MCF 10A (cell line): ENCODE measurements at regions of chr5 and their contacts with region 1.

Region 1: DNA sequence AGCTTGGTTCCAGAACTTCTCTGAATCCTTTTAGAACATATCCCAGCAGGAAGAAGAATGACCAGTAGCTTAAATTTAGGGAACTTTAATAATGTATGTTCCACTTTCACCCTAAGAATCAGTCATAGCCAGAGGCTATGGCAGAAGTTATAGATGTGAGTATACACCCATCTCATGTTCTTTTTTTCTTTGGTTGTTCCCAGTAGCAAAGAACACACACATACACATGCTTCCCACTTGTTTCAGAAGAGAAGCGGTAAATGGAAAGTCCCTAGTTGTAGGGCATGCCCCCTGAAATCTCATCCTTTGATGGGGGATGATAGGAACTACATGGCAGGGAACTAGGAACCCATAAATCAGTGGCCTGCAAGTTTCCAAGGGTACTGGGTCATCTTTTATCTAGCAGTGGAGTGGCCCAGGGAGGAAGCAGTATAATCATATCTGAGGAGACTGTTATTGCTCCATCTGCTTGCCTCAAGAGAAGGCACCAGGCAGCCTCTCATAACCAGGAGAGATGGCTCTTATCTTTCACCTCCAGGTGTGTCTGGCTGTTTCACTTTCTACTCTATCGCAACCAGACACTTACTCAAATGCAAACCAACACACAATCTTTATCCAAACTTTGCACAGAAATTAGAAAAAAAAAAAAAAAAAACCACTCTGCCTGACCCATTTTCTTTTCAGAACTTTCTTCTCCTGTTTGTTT is 109.5 kb downstream of the SNCAIP start:
- DNase-seq: no peak
- H3K4me3 Mint-ChIP-seq: no peak overlapping the region
- H3K27ac Mint-ChIP-seq: no peak overlapping the region
- H3K4me1 Mint-ChIP-seq: no peaks in the 10 kb centered on the region
- H3K27me3 Mint-ChIP-seq: no peaks in the 10 kb centered on the region
- CTCF ChIP-seq: no peak

Region 2: DNA sequence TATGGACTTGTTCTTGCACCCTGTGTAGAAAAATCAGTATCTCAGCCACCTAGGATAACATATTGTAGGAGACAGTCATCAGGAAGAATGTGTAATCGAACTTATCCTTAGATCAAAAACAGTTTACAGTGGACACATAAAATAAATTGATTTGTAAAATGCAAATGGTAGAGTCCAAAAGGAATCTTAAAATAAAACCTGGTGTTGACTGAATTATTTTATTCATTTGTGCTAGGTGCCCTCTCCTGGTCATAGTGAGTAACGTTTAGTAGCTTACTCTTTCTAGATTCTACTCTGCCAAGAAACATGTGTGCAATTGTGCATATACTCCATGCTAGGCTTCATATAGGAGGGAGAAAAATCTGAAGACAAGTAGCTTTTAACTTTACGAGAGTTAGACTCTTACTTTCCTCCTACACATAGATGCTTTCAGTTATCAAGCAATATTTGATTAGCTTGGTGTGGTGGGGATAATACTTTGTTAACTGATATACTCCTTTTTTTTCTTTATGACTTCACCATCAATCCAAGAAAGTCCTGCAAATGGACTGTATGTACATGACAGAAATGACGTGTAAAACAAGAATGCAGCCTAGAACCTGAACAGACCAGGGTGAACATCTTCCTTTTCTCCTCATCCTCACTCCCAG is 319.8 kb before region 1 on chr5:
- CTCF ChIA-PET with region 1: no interaction called
- POLR2A ChIA-PET with region 1: no interaction called
- intact Hi-C with region 1: no loop called
- DNase-seq: peak; percentile 76
- H3K4me3 Mint-ChIP-seq: no peak overlapping the region
- H3K27ac Mint-ChIP-seq: peak overlapping the region; percentile 35
- H3K4me1 Mint-ChIP-seq: peaks cover 19% of the 10 kb centered on the region
- H3K27me3 Mint-ChIP-seq: no peaks in the 10 kb centered on the region
- CTCF ChIP-seq: peak; percentile 67

Region 3: DNA sequence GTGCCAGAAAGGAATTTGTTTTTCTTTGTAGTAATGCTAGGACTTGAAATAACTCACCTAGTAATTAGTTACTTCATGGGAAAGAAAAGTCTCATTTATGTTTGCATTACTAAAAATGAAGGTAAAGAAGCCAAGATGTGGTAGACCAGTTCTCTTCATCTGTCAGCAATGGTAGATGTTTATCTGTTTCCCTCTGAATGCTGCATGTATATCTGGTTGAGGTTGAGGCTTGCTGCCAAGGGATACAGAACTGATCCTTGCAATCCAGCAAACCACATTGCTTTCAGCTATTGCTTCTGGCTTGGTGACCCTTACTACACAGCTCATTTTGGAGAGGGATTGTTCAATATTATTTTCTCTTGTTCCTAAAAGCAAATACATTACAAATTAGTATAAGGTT is 218.6 kb before region 1 on chr5:
- CTCF ChIA-PET with region 1: interaction called, 402 read pairs
- POLR2A ChIA-PET with region 1: no interaction called
- intact Hi-C with region 1: no loop called
- DNase-seq: no peak
- H3K4me3 Mint-ChIP-seq: no peak overlapping the region
- H3K27ac Mint-ChIP-seq: no peak overlapping the region
- H3K4me1 Mint-ChIP-seq: no peaks in the 10 kb centered on the region
- H3K27me3 Mint-ChIP-seq: peaks cover 19% of the 10 kb centered on the region
- CTCF ChIP-seq: no peak